ENCODE measurements at regions of chr5 and their contacts with region 1.

Region 1: DNA sequence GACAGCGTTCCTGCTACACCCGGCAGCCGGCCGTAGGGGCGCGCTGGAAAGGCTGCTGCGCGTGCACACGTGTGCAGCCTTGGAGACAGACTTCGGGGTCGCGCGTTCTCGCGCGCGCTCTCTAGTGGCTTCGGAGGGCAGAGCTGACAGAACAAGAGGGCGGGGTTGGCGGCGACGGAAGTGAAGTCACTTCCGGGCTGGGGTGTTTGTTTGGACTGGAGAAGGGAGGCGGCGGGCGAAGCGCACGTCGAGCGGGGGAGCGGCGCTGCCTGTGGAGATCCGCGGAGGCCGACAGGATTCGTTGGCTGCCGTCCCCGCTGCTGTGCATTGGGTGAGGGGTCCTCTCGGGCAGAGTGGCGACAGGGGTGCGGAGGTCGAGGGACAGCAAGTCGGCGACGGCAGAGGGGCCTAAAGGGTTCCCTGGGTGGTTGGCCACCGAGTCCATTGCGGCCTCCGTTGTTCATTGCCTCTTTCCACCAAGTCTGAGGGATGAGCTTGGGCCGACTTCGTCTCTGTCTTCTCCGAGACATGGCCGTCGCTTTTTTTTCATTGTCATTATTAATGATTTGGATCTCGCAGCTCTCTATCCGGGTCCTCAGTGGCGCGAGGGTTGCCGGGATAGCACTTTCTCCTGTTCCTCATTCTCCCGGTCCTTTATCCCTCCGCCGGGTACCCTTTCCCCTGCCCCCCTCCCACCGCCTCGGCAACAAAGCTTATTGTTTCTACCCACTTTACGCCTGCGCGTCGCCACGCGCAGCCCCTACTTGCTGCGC is at the start of gene PAIP2:
- DNase-seq: peak; percentile 95 to 99 (median 98)
- ATAC-seq: peak; percentile 82
- H3K4me3 Mint-ChIP-seq: peak within 1 kb of the TSS; percentile 89 to 100 (median 97)
- H3K27ac Mint-ChIP-seq: peak within 1 kb of the TSS; percentile 97 to 100 (median 98)
- H3K4me1 Mint-ChIP-seq: peaks cover 26 to 60% (median 55%) of the 10 kb centered on the region in 4 donors
- H3K27me3 Mint-ChIP-seq: no peaks in the 10 kb centered on the region
- polyA plus RNA-seq, gene PAIP2: 359 to 455 (median 406) TPM

Region 2: DNA sequence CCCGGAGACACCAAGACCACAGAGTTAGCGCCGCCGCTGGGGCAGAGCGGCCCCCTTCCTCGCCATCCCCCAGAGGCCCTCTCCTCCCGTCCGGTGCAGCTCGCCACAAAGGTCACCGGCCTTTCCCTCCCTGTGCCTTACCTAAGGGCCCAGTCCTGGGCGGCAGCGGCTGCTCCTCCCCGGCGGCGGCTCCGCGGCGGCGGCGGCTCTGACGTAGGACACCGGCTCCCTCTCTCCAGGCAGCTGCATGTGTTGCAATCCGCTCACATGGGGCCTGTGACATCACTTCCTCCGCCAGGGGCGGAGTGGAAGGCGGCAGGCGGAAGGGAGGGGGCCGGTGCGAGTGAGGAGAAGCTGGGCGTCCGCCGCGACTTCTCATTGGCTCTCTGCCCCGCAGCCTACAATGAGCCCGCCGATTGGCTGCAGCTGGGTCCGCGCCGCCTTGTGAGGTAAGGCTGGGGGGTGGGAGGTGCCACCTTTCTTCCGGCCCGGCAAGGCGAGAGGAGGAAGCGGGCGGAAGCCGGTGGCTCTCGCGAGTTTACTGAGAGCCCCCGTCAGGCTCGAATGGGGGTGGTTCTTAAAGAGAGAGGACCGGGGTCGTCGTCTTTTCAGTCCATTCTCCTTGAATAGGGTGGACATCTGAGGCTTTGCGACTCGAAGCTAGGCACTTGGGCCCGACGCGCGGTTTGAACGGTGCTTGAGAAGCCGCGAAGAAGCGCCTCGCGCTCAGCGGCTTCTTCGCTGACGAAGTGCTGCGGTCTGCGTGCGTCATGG is 798.7 kb before region 1 on chr5 and contains the start of gene ETF1:
- POLR2A ChIA-PET with region 1: interaction called, 11 read pairs
- DNase-seq: peak; percentile 97 to 100 (median 100)
- ATAC-seq: peak; percentile 86 to 87
- H3K4me3 Mint-ChIP-seq: peak within 1 kb of the TSS; percentile 94 to 100 (median 100)
- H3K27ac Mint-ChIP-seq: peak within 1 kb of the TSS; percentile 99 to 100 (median 100)
- H3K4me1 Mint-ChIP-seq: peaks cover 35 to 79% (median 74%) of the 10 kb centered on the region in 4 donors
- H3K27me3 Mint-ChIP-seq: no peaks in the 10 kb centered on the region
- polyA plus RNA-seq, gene ETF1: 21.5 to 27.5 (median 24.1) TPM

Region 3: DNA sequence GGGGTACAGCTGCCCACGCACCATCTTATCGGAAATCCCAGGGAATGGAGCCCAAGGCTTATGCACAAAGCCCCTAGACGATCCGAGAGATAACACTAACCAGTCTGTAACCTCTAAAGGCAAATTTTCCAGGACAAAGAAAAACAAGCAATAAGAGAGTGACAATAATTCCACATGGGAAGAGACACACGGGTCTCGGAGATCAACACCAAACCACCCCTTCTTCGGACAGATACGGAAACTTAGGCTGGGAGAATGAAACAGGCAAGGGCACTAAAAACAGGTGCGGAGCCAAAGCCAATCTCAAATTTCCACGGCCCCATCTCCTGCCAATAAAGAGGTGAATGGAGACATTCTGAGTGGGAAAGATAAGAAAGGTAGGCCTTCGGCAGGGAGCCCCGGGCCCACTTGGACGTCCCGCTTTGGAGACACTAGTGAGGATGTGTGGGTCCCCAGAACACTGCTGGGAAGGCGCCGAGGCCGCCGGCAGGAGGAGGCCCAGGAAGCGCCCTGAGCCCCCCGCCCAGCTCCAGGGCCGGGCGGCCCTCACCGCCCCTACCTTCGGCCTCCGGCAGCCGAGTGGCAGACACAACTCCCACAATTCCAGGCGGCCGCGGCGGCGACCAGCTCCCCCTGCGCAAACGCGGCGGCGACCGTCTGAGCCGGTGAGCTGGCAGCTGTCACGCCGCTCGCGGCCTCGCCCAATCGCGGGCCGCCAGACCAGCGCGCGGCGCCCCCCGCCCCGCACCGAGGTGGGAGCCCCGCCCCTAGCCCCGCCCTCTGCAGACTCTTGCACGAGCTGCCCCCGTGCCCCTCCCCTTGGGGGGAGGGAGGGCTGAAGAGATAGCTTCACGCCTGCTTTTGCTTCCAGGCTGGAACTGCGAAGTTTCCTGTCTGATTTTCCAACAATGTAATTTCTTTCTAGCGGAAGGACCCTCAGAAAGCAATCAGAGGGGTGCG is 143.8 kb before region 1 on chr5 and contains the start of gene SIL1:
- POLR2A ChIA-PET with region 1: interaction called, 12 read pairs
- DNase-seq: peak; percentile 88 to 99 (median 94)
- ATAC-seq: peak; percentile 98
- H3K4me3 Mint-ChIP-seq: peak within 1 kb of the TSS; percentile 80 to 96 (median 90)
- H3K27ac Mint-ChIP-seq: peak within 1 kb of the TSS; percentile 91 to 97 (median 94)
- H3K4me1 Mint-ChIP-seq: peaks cover 15 to 32% (median 24%) of the 10 kb centered on the region in 4 donors
- H3K27me3 Mint-ChIP-seq: no peaks in the 10 kb centered on the region
- polyA plus RNA-seq, gene SIL1: 11.9 to 14.2 (median 13.5) TPM

Region 4: GRCh38 chr5:139273572-139274289 is 68.1 kb before region 1 on chr5:
- POLR2A ChIA-PET with region 1: interaction called, 13 read pairs
- DNase-seq: peak; percentile 66 to 93 (median 83)
- ATAC-seq: peak; percentile 82 to 88
- H3K4me3 Mint-ChIP-seq: peak overlapping the region; percentile 80 to 94 (median 88)
- H3K27ac Mint-ChIP-seq: peak overlapping the region; percentile 72 to 95 (median 90)
- H3K4me1 Mint-ChIP-seq: peaks cover 32 to 57% (median 55%) of the 10 kb centered on the region in 4 donors
- H3K27me3 Mint-ChIP-seq: no peaks in the 10 kb centered on the region

Region 5: GRCh38 chr5:139287890-139288635 is 53.8 kb before region 1 on chr5:
- POLR2A ChIA-PET with region 1: interaction called, 126 read pairs
- DNase-seq: peak in 1 of 10 donors; percentile 32
- ATAC-seq: peak; percentile 59 to 69
- H3K4me3 Mint-ChIP-seq: no peak overlapping the region
- H3K27ac Mint-ChIP-seq: peak overlapping the region in 3 of 10 donors; percentile 14 to 27 (median 23)
- H3K4me1 Mint-ChIP-seq: peaks cover 0 to 9% (median 3%) of the 10 kb centered on the region in 4 donors
- H3K27me3 Mint-ChIP-seq: no peaks in the 10 kb centered on the region

Region 6: DNA sequence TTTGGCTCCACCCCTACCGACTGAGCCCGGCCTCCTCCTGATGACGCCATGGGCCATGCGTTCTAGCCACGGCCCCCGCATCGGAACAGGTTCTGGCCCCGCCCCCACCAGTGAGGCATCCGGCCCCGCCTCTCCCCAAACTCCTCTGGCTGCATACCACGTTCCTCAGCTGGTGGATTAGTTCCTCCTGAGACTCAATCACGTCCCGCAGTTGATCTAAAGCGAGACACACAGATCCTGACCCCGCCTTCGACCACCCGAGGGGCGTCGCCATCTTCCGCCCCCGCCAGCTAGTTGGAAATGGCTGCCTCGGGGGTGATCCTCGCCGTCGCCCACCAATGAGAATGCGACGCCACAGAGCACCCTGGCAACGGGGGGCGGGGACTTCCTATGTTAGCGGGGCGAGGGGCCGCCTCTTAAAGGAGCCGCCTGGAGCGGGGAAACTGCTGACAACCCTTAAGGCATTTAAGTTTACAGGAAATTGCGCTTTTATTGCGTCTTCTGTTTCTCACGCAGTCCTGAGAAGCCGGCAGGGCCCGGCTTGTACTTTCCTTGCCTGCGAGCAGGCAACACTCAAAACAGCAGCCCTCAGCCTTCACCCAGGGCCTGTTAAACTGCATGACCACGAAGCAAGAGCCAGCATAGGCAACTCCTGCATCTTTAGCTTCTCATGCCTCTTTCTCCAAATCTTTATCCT is 62.1 kb after region 1 on chr5 and contains the start of gene SPATA24:
- POLR2A ChIA-PET with region 1: interaction called, 18 read pairs
- DNase-seq: peak; percentile 94 to 99 (median 98)
- ATAC-seq: peak; percentile 89 to 91
- H3K4me3 Mint-ChIP-seq: peak within 1 kb of the TSS; percentile 87 to 99 (median 96)
- H3K27ac Mint-ChIP-seq: peak within 1 kb of the TSS; percentile 95 to 100 (median 99)
- H3K4me1 Mint-ChIP-seq: peaks cover 24 to 45% (median 30%) of the 10 kb centered on the region in 4 donors
- H3K27me3 Mint-ChIP-seq: no peaks in the 10 kb centered on the region
- polyA plus RNA-seq, gene SPATA24: 2.9 to 8.7 (median 4.3) TPM